Activated CD4-positive, alpha-beta memory T cell treated with anti-CD3 and anti-CD28 coated beads for 36 hours (primary cell): ENCODE measurements at regions of chr2 and their contacts with region 1.

Region 1: DNA sequence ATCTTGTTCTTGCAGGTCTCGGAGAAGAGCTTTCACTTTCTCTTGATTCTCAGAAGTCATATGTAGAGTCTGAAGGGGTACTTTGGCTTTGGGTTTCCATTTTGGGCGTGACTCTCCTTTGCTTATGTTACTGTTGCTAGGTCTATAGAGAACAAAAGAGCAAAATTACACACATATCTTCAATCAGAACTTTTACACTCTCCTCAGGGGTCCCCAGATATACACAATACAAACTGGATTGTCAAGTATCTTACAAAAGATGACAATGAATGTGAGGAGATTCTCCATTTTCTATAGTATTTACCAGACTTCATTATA is 12.4 kb downstream of the DHX57 start:
- DNase-seq: no peak
- H3K4me3 Mint-ChIP-seq: no peak overlapping the region
- H3K27ac Mint-ChIP-seq: no peak overlapping the region
- H3K4me1 Mint-ChIP-seq: peaks cover 8% of the 10 kb centered on the region
- H3K27me3 Mint-ChIP-seq: no peaks in the 10 kb centered on the region

Region 2: DNA sequence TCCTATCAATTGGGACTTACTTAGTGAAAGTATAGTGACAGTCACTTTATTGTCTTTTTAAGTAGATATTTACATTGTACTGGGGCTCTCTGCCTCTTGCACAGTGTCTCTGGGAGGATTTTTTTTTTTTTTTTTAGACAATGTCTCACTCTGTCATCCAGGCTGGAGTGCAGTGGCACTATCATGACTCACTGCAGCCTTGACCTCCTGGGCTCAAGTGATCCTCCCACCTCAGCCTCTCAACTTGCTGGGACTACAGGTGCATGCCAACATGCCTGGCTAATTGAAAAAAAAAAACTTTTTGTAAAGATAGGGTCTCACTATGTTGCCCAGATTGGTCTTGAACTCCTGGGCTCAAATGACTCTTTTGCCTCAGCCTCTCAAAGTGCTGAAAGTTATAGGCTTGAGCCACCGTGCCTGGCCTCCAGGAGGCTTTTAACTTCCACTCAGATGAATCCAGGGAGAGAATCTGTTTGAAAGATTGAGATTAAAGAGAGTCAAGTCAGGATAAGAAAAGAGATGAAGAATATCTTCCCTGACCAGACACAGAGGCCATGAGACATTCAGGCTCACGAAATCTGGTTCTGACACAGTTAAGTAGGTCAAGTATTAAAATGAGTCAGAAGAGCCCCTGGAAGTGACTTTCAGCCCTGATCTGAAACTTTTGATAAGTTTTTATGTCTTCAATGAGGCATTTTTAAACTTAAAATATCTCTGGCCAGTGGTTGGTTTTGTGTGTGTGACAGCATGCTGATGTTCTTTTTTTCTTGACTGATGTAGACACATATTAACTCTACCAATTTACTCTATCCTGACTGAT is 44.6 kb after region 1 on chr2:
- CTCF ChIA-PET with region 1: no interaction called
- POLR2A ChIA-PET with region 1: no interaction called
- intact Hi-C with region 1: loop called (anchors 1 kb)
- DNase-seq: peak; percentile 30
- H3K4me3 Mint-ChIP-seq: no peak overlapping the region
- H3K27ac Mint-ChIP-seq: peak overlapping the region; percentile 35
- H3K4me1 Mint-ChIP-seq: peaks cover 15% of the 10 kb centered on the region
- H3K27me3 Mint-ChIP-seq: no peaks in the 10 kb centered on the region